Right ventricle myocardium superior (tissue), 1 donor: ENCODE measurements at regions of chr9 and their contacts with region 1.

Region 1: DNA sequence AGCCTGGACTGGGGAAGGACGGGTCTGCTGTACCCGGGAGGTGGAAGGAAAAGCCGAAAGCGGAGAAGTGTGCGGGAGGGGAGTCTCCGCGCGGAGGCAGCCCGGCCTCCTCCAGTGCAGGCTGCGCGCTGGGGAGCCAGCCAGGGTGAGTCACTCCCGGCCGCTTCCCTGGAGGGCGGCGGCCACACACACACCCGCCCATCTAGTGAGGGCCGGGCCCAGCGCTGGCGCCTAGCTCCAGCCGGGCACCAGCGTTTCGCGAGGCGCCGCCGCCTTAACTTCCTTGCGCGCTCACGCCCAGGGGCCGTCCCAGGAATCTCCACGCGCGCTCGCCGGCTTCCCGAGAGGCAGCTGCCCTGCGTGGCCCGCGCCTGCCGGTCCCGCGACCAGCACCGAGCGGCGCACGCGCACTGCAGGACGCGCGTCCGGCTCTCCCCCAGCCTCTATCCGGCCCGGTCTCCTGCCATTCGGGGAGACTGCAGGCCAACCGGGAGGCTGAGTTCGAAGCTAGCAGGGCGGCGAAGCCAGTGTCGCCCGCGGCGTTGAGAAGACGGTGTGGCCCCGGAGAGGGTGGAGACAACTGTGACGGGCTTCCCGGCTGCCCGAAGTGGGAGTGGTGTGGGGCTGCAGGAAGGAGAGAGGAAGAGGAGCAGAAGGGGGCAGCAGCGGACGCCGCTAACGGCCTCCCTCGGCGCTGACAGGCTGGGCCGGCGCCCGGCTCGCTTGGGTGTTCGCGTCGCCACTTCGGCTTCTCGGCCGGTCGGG is at the start of gene JAK2:
- DNase-seq: peak; percentile 95
- ATAC-seq: peak; percentile 94
- total RNA-seq, gene JAK2: 12.7 TPM

Region 2: GRCh38 chr9:4762108-4762885 is 222.5 kb before region 1 on chr9:
- intact Hi-C with region 1: loop called (anchors 5 kb)
- DNase-seq: peak; percentile 76
- ATAC-seq: peak; percentile 80

Region 3: GRCh38 chr9:4781408-4781807 is 203.4 kb before region 1 on chr9:
- intact Hi-C with region 1: no loop called
- DNase-seq: no peak
- ATAC-seq: no peak

Region 4: DNA sequence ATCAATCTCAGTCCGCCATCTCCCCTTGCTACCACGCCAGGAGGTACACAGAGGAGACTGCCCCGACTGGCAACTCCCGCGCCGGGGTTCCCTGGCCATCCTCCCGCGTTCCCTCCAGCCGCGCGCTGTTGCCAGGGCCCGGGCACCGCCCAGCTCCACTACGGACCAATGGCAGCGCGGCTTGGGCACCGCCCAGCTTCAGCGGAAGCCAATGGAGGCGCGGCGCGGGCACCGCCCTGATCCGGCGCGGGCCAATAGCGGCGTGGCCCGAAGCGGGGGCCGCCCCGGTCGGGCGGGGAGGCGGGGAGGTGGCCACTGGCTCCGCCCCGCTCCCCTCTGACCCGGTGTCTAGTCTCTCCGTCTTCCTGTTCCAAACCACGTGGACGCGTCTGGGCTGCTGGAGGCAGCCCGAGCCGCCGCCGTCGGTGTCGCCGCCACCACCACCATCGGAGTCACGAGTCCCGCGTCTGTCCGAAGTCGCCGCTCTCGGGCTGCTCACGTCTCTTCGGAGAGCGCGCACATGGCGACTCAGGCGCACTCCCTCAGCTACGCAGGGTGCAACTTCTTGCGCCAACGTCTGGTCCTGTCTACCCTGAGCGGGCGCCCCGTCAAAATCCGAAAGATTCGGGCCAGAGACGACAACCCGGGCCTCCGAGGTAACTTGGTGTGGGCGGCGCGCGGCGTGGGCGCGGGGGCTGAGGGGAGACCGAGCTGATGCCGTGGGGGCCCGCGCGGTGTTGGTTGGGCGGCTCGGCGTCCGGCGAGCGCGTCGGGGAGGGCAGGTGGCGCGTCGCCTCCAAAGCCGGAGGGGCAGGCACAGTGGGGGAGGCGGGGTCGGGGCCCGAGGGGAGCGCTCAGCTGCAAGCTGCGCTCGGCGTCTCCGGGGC is 192.0 kb before region 1 on chr9 and contains the start of gene RCL1:
- intact Hi-C with region 1: loop called (anchors 10 kb)
- DNase-seq: peak; percentile 98
- ATAC-seq: peak; percentile 99
- total RNA-seq, gene RCL1: 4.5 TPM

Region 5: DNA sequence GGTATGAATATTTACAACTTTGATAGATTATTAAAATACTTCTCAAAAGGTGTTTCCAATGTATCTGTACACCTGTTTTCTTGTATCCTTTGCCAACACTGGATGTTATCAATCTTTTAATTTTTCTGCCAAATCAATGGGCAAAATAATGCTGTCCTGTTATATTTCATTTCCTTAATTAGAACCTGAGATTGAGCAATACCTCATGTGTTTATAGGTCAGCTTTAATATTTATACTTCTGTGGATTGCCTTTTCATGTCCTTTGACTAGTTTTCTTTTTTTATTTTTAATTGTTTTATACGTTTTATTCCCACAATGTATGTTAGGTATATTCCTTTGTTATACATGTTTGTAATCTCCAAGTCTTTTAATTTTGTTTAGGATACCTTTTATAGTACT is 77.8 kb after region 1 on chr9:
- intact Hi-C with region 1: no loop called
- DNase-seq: no peak
- ATAC-seq: no peak